ENCODE measurements at regions of chr14 and their contacts with region 1.

Region 1: GRCh38 chr14:31456841-31457664 is at the start of gene DTD2:
- DNase-seq: peak; percentile 84 to 94 (median 87)
- H3K4me3 ChIP-seq: peak within 1 kb of the TSS; percentile 85
- H3K4me3 Mint-ChIP-seq: peak within 1 kb of the TSS; percentile 94 to 97 (median 97)
- H3K27ac ChIP-seq: peak within 1 kb of the TSS; percentile 87
- H3K27ac Mint-ChIP-seq: peak within 1 kb of the TSS; percentile 93 to 98 (median 96)
- H3K4me1 ChIP-seq: peaks cover 15% of the 10 kb centered on the region
- H3K4me1 Mint-ChIP-seq: peaks cover 25 to 47% (median 43%) of the 10 kb centered on the region in 3 donors
- H3K27me3 ChIP-seq: no peaks in the 10 kb centered on the region
- H3K27me3 Mint-ChIP-seq: peaks cover 3 to 11% of the 10 kb centered on the region in 2 donors
- total RNA-seq, gene DTD2: 28.4 to 28.7 TPM

Region 2: DNA sequence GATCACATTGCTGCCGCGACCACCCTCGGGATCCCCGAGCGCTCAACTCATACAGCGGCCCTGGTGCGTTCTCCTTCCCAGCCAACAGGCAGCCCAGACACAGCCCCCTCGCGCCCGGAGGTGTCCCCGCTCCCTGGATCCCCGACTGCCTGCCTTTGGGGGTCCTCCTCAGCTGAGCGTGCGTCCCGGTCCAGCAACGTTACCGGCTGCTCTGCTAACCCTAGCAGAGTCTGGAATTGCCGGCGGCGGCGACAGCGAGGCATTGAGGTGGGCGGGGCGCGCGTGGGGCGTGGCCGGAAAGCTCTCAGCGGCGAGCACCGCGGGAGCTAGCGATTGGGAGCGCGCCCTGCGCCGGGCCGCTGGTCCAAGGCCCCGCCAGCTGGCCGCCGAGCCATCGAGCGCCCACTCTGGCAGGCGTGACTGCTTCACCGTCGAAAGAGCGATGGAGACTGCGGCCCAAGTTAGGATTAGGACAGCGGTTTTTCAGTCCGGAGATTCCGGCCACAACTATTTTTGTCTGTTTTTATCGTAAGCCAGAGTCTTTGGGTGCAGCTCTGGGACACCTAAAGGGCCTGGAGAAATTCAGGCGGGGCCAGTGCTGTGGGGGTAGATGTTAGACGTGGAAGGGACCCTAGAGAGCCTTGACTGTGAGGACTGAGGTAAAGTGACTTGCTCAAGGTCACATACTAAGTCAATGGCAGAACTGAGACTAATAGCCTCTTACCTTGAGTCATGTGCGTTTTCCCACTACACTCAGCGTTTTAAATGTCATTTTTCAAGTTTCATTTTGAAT is 36.5 kb before region 1 on chr14 and contains the start of gene HEATR5A:
- CTCF ChIA-PET with region 1: interaction called, 11 read pairs
- POLR2A ChIA-PET with region 1: interaction called, 14 read pairs
- DNase-seq: peak; percentile 87 to 93 (median 91)
- H3K4me3 ChIP-seq: peak within 1 kb of the TSS; percentile 93
- H3K4me3 Mint-ChIP-seq: peak within 1 kb of the TSS; percentile 96 to 100 (median 98)
- H3K27ac ChIP-seq: peak within 1 kb of the TSS; percentile 81
- H3K27ac Mint-ChIP-seq: peak within 1 kb of the TSS; percentile 54 to 98 (median 93)
- H3K4me1 ChIP-seq: peaks cover 9% of the 10 kb centered on the region
- H3K4me1 Mint-ChIP-seq: peaks cover 24 to 36% (median 30%) of the 10 kb centered on the region in 3 donors
- H3K27me3 ChIP-seq: no peaks in the 10 kb centered on the region
- H3K27me3 Mint-ChIP-seq: peaks cover 0 to 1% of the 10 kb centered on the region in 2 donors
- total RNA-seq, gene HEATR5A: 12.7 to 13.8 TPM

Region 3: DNA sequence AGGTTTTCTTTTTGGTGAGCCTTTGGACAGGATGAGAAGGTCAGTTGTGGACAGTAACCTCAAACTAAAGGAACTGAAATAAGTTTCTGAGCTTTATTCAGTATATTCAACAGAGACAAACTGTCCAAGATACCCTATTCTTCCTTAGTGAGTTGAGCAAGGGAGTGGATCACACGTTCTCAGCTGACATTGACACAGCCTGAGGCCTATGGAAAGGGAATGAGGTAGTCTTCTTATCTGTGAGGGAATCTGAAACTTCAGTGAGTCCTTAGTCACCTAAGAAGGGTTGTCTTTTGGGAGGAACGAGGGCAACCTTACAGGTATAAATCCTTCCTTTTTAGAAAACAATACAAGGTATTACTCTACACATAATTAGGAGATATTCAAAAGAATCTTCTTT is 99.1 kb after region 1 on chr14:
- CTCF ChIA-PET with region 1: no interaction called
- POLR2A ChIA-PET with region 1: interaction called, 14 read pairs
- DNase-seq: no peak
- H3K4me3 ChIP-seq: no peak overlapping the region
- H3K4me3 Mint-ChIP-seq: no peak overlapping the region
- H3K27ac ChIP-seq: no peak overlapping the region
- H3K27ac Mint-ChIP-seq: peak overlapping the region in 1 of 8 donors; percentile 10
- H3K4me1 ChIP-seq: peaks cover 7% of the 10 kb centered on the region
- H3K4me1 Mint-ChIP-seq: peaks cover 8 to 10% (median 9%) of the 10 kb centered on the region in 3 donors
- H3K27me3 ChIP-seq: no peaks in the 10 kb centered on the region
- H3K27me3 Mint-ChIP-seq: peaks cover 13 to 58% of the 10 kb centered on the region in 2 donors

Region 4: GRCh38 chr14:31561155-31561846 is 104.2 kb after region 1 on chr14 and contains the start of gene NUBPL:
- CTCF ChIA-PET with region 1: no interaction called
- POLR2A ChIA-PET with region 1: interaction called, 10 read pairs
- DNase-seq: peak; percentile 97 to 99 (median 98)
- H3K4me3 ChIP-seq: peak within 1 kb of the TSS; percentile 82
- H3K4me3 Mint-ChIP-seq: peak within 1 kb of the TSS; percentile 93 to 97 (median 96)
- H3K27ac ChIP-seq: peak within 1 kb of the TSS; percentile 84
- H3K27ac Mint-ChIP-seq: peak within 1 kb of the TSS; percentile 94 to 99 (median 98)
- H3K4me1 ChIP-seq: peaks cover 14% of the 10 kb centered on the region
- H3K4me1 Mint-ChIP-seq: peaks cover 23 to 36% (median 31%) of the 10 kb centered on the region in 3 donors
- H3K27me3 ChIP-seq: no peaks in the 10 kb centered on the region
- H3K27me3 Mint-ChIP-seq: peaks cover 6 to 16% of the 10 kb centered on the region in 2 donors
- total RNA-seq, gene NUBPL: 10.9 to 13.0 TPM